Gastrocnemius medialis (tissue), 4 donors: ENCODE measurements at regions of chr13 and their contacts with region 1.

Region 1: GRCh38 chr13:99200432-99201167 is at the start of gene UBAC2:
- DNase-seq: peak; percentile 89 to 94
- ATAC-seq: peak; percentile 89 to 91
- H3K4me3 ChIP-seq: peak within 1 kb of the TSS; percentile 87 to 100 (median 98)
- H3K27ac ChIP-seq: peak within 1 kb of the TSS; percentile 98 to 100 (median 100)
- H3K4me1 ChIP-seq: peaks cover 30 to 34% of the 10 kb centered on the region in 2 donors
- H3K27me3 ChIP-seq: no peaks in the 10 kb centered on the region
- CTCF ChIP-seq: no peak
- POLR2A ChIP-seq: peak; percentile 94
- total RNA-seq, gene UBAC2: 51.0 to 71.5 (median 61.1) TPM

Region 2: DNA sequence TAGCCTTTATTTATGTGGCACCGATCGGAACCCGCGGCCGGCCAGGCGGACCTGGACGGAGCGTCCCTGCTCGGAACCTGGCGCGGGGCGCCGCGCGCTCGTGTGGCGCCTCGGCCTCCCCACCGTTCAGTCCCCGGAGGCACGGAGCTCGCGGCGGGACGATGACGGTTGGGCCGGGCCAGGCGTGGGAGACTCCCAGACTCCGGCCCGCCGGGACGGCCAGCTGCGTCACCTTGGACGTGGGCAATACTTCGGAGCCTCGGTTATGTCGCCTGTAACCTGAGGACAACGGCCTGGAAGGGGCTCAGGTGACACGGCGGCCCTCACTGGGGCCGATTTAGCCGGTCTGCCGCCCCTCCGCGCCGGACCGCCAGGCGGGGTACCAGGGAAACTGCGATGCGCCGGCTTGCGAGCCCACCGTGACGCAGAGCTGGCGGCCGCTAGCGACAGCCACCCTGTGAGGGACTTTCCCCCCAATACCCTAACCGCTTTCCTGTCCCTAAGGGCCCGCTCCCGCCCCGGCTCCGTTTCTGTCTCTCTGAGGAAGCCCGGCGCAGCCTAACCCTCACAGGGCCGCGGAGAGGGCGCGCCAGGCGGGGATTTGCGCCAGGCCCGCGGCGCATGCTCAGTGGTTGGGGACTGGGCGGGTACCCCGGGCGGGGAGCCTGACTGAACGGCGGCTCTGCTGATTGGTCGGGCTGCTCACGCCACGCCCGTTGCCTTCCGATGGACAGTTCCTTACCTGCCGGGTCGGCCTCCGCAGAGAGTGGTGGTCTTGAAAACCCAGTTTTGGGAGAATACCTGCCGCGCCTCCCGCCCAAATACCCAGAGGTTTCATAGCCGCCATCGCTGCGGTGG is 113.3 kb before region 1 on chr13:
- in situ Hi-C with region 1: no loop called
- intact Hi-C with region 1: loop called (anchors 2 kb)
- DNase-seq: peak; percentile 78 to 83
- ATAC-seq: peak; percentile 80 to 82
- H3K4me3 ChIP-seq: peak overlapping the region; percentile 79 to 90 (median 84)
- H3K27ac ChIP-seq: peak overlapping the region; percentile 90 to 96 (median 92)
- H3K4me1 ChIP-seq: peaks cover 6 to 15% of the 10 kb centered on the region in 2 donors
- H3K27me3 ChIP-seq: no peaks in the 10 kb centered on the region
- CTCF ChIP-seq: peak in 2 of 5 experiments; percentile 30 to 37
- POLR2A ChIP-seq: peak; percentile 76 to 78

Region 3: DNA sequence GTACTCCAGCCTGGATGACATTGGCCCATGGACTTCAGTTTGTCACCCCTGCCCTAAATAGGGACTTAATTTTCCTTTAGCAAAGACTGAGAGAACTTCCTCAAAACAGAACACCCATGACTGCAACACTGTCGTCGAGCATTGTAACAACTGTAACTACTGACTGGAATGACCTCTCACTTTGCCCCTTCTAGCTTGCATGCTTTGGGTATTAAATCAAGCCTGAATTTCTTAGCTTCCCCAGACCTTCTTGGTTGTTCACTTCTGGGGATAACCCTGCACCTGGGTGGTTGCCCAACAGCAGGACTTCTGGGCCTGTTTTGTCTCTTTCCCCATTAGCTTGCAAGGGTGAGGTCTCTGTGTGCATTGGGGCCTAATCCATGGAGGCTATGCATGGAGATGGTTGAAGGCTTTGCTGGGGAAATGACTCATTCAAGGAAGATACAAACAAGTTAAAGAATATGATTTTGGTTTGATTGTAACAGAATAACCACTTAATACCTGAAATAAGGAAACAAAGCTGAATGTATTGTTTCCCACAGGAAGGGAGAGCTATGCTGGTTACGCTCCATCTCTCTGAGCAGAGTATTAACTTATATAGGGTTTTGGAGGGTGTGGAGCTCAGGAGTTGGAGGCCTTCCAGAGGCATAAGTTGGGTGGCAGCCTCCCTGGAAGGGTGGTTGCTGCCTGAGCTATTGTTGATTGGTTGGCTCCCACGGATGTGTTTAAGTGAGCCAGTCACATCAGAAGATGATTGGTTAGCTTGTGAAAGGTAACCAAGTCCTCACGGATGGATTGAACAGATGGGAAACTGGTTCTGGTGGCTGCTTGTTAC is 34.6 kb before region 1 on chr13:
- in situ Hi-C with region 1: no loop called
- intact Hi-C with region 1: no loop called
- DNase-seq: no peak
- ATAC-seq: no peak
- H3K4me3 ChIP-seq: no peak overlapping the region
- H3K27ac ChIP-seq: no peak overlapping the region
- H3K4me1 ChIP-seq: no peaks in the 10 kb centered on the region
- H3K27me3 ChIP-seq: no peaks in the 10 kb centered on the region
- CTCF ChIP-seq: no peak
- POLR2A ChIP-seq: no peak

Region 4: GRCh38 chr13:99218969-99219368 is 18.4 kb after region 1 on chr13:
- in situ Hi-C with region 1: no loop called
- intact Hi-C with region 1: loop called (anchors 2 kb)
- DNase-seq: no peak
- ATAC-seq: peak in 1 of 2 donors; percentile 17
- H3K4me3 ChIP-seq: no peak overlapping the region
- H3K27ac ChIP-seq: peak overlapping the region; percentile 69 to 84 (median 78)
- H3K4me1 ChIP-seq: peaks cover 68 to 70% of the 10 kb centered on the region in 2 donors
- H3K27me3 ChIP-seq: no peaks in the 10 kb centered on the region
- CTCF ChIP-seq: no peak
- POLR2A ChIP-seq: no peak